RWPE1 (cell line): ENCODE measurements at regions of chr4 and their contacts with region 1.

Region 1: DNA sequence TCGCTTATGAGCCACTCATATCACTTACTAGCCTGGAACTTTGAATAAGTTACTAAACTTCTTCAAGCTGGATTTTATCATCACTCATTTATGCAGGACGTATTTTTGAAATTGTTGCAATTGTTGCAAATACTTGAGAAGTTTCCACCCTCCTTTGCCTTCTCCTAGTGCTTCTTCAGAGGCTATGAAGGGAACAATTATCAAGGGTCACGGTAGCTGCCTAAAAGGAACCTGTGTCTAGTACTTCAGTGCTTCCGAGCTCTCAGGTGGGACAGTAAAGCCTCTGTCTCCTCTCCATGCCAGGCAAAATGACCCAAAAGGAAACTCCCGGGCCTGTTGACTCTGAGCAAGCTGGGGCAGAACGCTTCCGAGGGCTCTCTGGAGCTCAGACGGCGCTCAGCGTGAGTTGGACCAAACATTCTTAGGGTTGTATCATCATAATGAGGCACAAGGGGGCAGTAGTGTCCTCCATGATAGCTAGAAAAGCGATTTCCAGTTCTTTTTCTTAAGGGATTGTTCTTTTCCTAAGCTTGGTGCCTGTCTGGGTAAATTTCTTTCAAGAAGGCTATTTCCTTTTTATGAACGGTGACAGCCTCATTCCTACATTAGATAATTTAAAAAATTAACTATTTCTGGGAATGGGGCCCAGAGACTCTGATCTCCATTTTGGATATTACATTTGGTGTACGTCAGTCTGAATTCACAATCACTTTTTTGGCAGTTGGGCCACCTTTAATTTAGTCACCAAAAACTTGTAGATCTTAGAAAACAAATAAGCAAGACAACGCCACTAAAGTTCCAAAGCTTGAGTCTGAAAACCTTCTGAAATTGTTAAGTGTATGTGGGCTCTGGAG is 73.1 kb downstream of the PACRGL start:
- DNase-seq: peak; percentile 59
- H3K27ac ChIP-seq: no peak overlapping the region
- CTCF ChIP-seq: peak; percentile 71

Region 2: DNA sequence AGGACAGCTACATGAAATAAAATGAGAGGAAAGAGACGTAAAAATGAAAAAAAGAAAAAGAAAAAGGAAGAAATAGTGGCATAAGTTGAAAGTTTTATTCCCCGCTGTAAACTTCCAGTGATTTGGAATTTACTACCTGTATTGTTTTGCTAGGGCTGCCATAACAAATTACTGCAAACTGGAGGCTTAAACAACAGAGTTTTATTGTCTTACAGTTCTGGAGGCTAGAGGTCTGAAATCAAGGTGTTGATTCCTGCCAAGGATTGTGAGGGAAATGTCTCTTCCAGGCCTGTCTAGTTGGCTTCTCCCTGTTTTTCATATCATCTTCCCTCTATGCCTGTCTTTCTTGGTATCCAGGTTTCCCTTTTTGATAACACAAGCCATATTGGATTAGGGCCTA is 192.5 kb before region 1 on chr4:
- CTCF ChIA-PET with region 1: no interaction called
- POLR2A ChIA-PET with region 1: no interaction called
- DNase-seq: no peak
- H3K27ac ChIP-seq: no peak overlapping the region
- CTCF ChIP-seq: no peak

Region 3: DNA sequence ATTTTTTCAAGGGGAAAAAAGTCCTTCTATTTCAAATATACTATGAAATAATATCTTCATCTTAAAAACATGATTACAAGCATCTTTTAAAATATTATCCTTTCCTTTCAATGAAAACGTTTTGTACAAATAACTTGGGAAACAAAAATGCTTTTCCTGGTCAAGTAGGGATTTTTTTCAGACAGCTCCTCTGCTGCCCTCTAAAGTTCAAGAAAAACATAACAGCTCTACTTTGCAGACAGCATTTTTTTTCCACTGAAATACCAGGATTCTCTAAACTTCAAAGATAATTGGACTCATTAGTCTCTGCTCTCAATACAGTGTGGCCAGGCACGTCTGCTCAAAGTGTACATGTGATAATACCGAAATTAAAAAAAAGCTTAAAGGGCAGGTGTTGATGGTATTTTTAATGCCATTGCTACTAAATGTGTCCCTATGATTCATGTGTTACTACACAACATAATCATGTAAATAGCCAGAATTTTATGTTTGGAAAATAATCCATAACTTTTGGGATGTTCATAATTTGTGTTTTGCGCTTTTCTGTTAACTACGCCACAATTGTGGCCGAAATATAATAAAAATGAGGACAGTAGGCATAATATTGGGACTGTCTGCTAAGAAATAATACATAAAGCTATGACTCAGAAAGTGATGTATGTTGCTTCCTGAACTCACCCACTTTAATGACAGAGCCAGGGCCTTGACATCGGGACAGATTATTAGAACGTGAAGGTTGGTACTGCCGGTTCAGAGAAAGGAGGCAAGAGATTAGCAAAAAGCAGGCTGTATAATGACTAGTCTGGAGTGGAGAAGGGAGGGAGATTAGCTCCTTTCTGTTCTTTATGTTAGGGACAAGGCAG is 696.3 kb after region 1 on chr4:
- CTCF ChIA-PET with region 1: interaction called, 10 read pairs
- POLR2A ChIA-PET with region 1: no interaction called
- DNase-seq: peak; percentile 12
- H3K27ac ChIP-seq: no peak overlapping the region
- CTCF ChIP-seq: peak; percentile 69